ENCODE measurements at regions of chr20 and their contacts with region 1.

Region 1: DNA sequence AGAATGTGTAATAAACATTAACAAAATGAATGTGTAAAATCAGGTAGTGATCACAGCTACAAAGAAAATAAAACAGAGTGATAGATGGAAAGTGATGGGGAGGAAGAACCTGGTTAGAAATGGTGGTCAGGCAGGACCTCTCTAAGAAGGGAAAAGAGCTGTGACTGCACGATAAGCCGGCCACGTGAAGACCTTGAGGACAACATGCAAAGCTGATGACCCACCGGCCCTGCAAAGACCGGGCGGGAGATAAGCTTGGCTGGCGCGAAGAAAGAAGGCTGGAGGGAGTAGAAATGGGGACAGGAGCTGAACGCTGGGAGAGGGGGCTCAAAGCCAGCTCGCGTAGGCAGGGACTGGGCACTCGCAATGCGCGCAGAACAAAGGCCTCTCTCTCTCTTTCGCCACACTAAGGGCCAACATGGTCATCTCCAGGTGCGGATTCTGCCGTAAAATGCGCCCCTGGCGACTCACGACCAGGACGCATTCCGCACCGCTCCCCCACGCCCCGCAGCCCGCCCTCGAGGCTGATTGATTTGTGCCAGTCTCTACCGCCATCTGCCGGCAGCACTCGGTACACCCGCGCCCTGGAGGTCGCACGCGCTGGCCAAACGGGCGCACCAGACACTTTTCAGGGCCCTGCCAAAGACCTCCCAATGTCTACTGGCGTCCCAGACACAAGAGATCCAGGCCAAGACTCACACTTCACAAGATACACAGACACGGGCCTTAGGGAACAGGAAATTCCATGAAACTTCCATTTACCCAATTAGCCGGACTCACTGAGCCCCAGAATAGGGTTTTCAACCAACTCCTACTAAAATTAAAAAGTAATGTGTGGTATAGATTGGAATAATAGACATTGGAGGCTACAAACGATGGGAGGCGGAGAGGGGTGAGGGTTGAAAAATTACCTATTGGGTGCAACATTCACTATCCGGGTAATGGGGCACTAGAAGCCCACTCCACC is 9.4 kb downstream of the DEFB132 start:
- DNase-seq: peak; percentile 86 to 93
- ATAC-seq: peak; percentile 97 to 100 (median 100)
- H3K4me3 ChIP-seq: peak overlapping the region; percentile 26
- H3K4me3 Mint-ChIP-seq: peak overlapping the region; percentile 86
- H3K27ac ChIP-seq: no peak overlapping the region
- H3K27ac Mint-ChIP-seq: no peak overlapping the region
- H3K4me1 ChIP-seq: peaks cover 9% of the 10 kb centered on the region
- H3K4me1 Mint-ChIP-seq: peaks cover 11% of the 10 kb centered on the region in 2 donors
- H3K27me3 ChIP-seq: peaks cover 7% of the 10 kb centered on the region
- H3K27me3 Mint-ChIP-seq: peaks cover 8 to 11% of the 10 kb centered on the region in 2 donors
- CTCF ChIP-seq: peak; percentile 90

Region 2: GRCh38 chr20:157154-157553 is 109.7 kb before region 1 on chr20 and contains the start of gene DEFB127:
- intact Hi-C with region 1: no loop called
- DNase-seq: no peak
- ATAC-seq: no peak
- H3K4me3 ChIP-seq: no peak within 1 kb of the TSS
- H3K4me3 Mint-ChIP-seq: no peak within 1 kb of the TSS
- H3K27ac ChIP-seq: no peak within 1 kb of the TSS
- H3K27ac Mint-ChIP-seq: no peak within 1 kb of the TSS
- H3K4me1 ChIP-seq: no peaks in the 10 kb centered on the region
- H3K4me1 Mint-ChIP-seq: no peaks in the 10 kb centered on the region
- H3K27me3 ChIP-seq: no peaks in the 10 kb centered on the region
- H3K27me3 Mint-ChIP-seq: peaks cover 14 to 53% of the 10 kb centered on the region in 2 donors
- CTCF ChIP-seq: no peak
- total RNA-seq, gene DEFB127: not detected

Region 3: DNA sequence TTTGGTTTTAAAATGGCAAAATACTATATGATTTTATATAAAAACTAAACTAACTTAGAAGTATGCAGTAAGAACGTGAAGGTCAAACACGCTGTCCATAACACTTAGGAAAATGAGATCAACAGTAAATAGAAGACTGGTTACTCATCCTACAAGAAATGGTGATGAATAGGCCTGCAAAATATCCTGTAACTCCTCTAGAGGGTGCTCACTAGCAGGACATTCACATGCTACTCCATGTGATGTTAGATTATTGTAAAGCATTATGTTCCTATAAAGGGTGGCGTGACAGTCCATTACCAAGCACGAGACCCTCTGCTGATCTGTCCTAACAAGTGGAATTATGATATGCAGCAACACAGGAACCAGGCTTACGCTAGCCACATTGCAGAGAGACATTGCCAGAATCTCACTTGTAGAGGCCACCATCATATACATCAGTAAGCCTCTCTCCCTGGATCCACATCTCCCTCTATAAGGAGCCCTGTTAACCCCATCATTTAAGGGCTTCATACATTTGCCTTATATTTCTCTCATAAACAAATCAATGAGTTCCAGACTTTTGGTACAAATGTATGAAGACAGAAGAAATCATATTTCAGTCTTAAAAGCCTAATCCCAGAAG is 57.8 kb before region 1 on chr20:
- intact Hi-C with region 1: loop called (anchors 5 kb)
- DNase-seq: peak in 1 of 2 donors; percentile 69
- ATAC-seq: peak; percentile 54 to 74 (median 64)
- H3K4me3 ChIP-seq: no peak overlapping the region
- H3K4me3 Mint-ChIP-seq: no peak overlapping the region
- H3K27ac ChIP-seq: no peak overlapping the region
- H3K27ac Mint-ChIP-seq: no peak overlapping the region
- H3K4me1 ChIP-seq: no peaks in the 10 kb centered on the region
- H3K4me1 Mint-ChIP-seq: no peaks in the 10 kb centered on the region
- H3K27me3 ChIP-seq: peaks cover 4% of the 10 kb centered on the region
- H3K27me3 Mint-ChIP-seq: peaks cover 5 to 19% of the 10 kb centered on the region in 2 donors
- CTCF ChIP-seq: peak; percentile 36

Region 4: DNA sequence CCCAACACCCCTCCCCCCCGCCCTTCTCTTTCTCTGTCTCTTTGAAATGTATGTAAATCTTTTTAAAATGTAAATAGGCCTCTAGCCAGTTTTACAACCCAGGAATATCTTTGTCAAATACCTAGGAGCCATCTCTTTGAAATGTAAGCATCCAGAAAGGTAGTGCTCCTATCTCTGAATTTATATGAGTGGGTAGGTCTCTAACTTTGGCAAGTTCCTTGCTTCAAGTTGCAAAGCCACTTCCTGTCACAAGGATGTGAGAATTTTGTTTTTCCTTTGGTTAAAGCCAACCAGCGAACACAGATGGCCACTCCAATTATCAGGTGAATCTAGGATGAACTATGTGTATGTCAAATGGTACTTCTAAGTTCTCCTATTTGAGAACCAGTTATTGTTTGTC is 15.5 kb before region 1 on chr20:
- intact Hi-C with region 1: no loop called
- DNase-seq: no peak
- ATAC-seq: no peak
- H3K4me3 ChIP-seq: no peak overlapping the region
- H3K4me3 Mint-ChIP-seq: no peak overlapping the region
- H3K27ac ChIP-seq: no peak overlapping the region
- H3K27ac Mint-ChIP-seq: no peak overlapping the region
- H3K4me1 ChIP-seq: no peaks in the 10 kb centered on the region
- H3K4me1 Mint-ChIP-seq: peaks cover 9 to 10% of the 10 kb centered on the region in 2 donors
- H3K27me3 ChIP-seq: no peaks in the 10 kb centered on the region
- H3K27me3 Mint-ChIP-seq: no peaks in the 10 kb centered on the region
- CTCF ChIP-seq: no peak

Region 5: GRCh38 chr20:330233-331149 is 63.6 kb after region 1 on chr20:
- intact Hi-C with region 1: loop called (anchors 1 kb)
- DNase-seq: peak; percentile 33 to 81
- ATAC-seq: peak; percentile 60 to 71 (median 61)
- H3K4me3 ChIP-seq: no peak overlapping the region
- H3K4me3 Mint-ChIP-seq: no peak overlapping the region
- H3K27ac ChIP-seq: no peak overlapping the region
- H3K27ac Mint-ChIP-seq: no peak overlapping the region
- H3K4me1 ChIP-seq: peaks cover 24% of the 10 kb centered on the region
- H3K4me1 Mint-ChIP-seq: peaks cover 0 to 10% of the 10 kb centered on the region in 2 donors
- H3K27me3 ChIP-seq: no peaks in the 10 kb centered on the region
- H3K27me3 Mint-ChIP-seq: no peaks in the 10 kb centered on the region
- CTCF ChIP-seq: peak; percentile 84

Region 6: GRCh38 chr20:354298-355064 is 87.6 kb after region 1 on chr20:
- intact Hi-C with region 1: no loop called
- DNase-seq: peak; percentile 70 to 92
- ATAC-seq: peak; percentile 99 to 100 (median 100)
- H3K4me3 ChIP-seq: no peak overlapping the region
- H3K4me3 Mint-ChIP-seq: no peak overlapping the region
- H3K27ac ChIP-seq: no peak overlapping the region
- H3K27ac Mint-ChIP-seq: no peak overlapping the region
- H3K4me1 ChIP-seq: peaks cover 7% of the 10 kb centered on the region
- H3K4me1 Mint-ChIP-seq: peaks cover 6 to 11% of the 10 kb centered on the region in 2 donors
- H3K27me3 ChIP-seq: no peaks in the 10 kb centered on the region
- H3K27me3 Mint-ChIP-seq: no peaks in the 10 kb centered on the region
- CTCF ChIP-seq: peak; percentile 85